ENCODE measurements at regions of chr3 and their contacts with region 1.

Region 1: DNA sequence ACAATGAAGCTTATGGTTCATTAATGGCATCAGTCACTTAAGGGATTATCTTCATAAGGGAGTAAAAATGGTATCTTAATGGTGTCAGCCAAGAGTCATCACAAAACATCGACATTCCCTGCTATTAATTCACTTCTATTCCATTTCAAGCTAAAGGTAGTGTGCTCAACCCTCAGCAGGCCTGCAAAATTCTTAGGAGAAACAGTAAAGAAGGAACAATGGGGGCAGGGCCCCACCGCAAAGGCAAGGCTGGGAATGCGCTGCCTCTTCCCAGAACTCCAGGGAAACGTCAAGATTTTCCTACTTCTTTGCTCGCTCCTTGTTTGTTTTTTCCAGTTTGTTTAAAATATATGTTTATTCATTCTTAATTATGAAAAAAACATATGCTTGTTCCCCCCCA is 187.3 kb upstream of the TSC22D2 start:
- DNase-seq: no peak
- ATAC-seq: no peak
- H3K4me3 ChIP-seq: no peak overlapping the region
- H3K4me3 Mint-ChIP-seq: no peak overlapping the region
- H3K27ac ChIP-seq: no peak overlapping the region
- H3K27ac Mint-ChIP-seq: no peak overlapping the region
- H3K4me1 ChIP-seq: peaks cover 6% of the 10 kb centered on the region
- H3K4me1 Mint-ChIP-seq: peaks cover 8% of the 10 kb centered on the region
- H3K27me3 ChIP-seq: peaks cover 9 to 29% of the 10 kb centered on the region in 2 experiments
- H3K27me3 Mint-ChIP-seq: peaks cover 68% of the 10 kb centered on the region
- CTCF ChIP-seq: no peak

Region 2: GRCh38 chr3:149936812-149937233 is 284.0 kb before region 1 on chr3:
- CTCF ChIA-PET with region 1: no interaction called
- POLR2A ChIA-PET with region 1: no interaction called
- intact Hi-C with region 1: loop called in 1 of 2 experiments (anchors 1 kb)
- DNase-seq: peak in 12 of 14 experiments; percentile 1 to 67 (median 20)
- ATAC-seq: peak; percentile 57
- H3K4me3 ChIP-seq: no peak overlapping the region
- H3K4me3 Mint-ChIP-seq: no peak overlapping the region
- H3K27ac ChIP-seq: no peak overlapping the region
- H3K27ac Mint-ChIP-seq: no peak overlapping the region
- H3K4me1 ChIP-seq: peaks cover 5% of the 10 kb centered on the region
- H3K4me1 Mint-ChIP-seq: peaks cover 22% of the 10 kb centered on the region
- H3K27me3 ChIP-seq: no peaks in the 10 kb centered on the region
- H3K27me3 Mint-ChIP-seq: no peaks in the 10 kb centered on the region
- CTCF ChIP-seq: peak; percentile 72

Region 3: DNA sequence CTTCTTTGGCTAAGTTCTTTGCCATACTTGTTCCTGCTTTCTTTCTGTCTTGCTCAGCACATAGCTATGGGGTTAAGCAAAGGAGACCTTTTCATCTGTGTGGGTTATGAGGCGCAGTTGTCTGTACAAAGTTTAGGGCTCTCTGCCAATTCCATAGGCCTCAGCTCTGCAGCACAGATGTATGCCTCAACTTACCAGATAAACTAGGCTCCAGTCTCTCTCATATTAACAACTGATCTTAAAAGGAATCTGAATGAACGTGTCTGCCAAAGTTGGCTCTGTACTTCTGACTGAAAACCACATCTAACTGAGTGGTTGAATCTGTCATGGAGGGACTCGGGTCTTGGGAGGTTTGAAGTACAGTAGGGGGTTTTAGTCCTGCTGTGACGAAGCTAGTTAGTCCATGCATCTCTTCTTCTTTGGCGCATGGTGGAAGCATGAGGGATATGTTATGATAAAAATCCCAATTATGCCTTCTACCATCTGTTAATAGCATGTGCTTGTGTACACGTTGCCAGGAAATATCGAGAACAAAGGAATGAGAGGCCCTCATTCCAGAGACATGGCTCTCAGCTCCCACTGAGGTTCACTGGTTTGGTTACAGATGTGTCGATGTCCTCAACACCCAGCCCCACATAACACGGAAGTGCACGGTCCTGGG is 72.7 kb after region 1 on chr3:
- CTCF ChIA-PET with region 1: no interaction called
- POLR2A ChIA-PET with region 1: no interaction called
- intact Hi-C with region 1: no loop called
- DNase-seq: no peak
- ATAC-seq: no peak
- H3K4me3 ChIP-seq: no peak overlapping the region
- H3K4me3 Mint-ChIP-seq: no peak overlapping the region
- H3K27ac ChIP-seq: no peak overlapping the region
- H3K27ac Mint-ChIP-seq: no peak overlapping the region
- H3K4me1 ChIP-seq: no peaks in the 10 kb centered on the region
- H3K4me1 Mint-ChIP-seq: no peaks in the 10 kb centered on the region
- H3K27me3 ChIP-seq: peaks cover 0 to 15% of the 10 kb centered on the region in 2 experiments
- H3K27me3 Mint-ChIP-seq: peaks cover 27% of the 10 kb centered on the region
- CTCF ChIP-seq: no peak